ENCODE measurements at regions of chr2 and their contacts with region 1.

Region 1: DNA sequence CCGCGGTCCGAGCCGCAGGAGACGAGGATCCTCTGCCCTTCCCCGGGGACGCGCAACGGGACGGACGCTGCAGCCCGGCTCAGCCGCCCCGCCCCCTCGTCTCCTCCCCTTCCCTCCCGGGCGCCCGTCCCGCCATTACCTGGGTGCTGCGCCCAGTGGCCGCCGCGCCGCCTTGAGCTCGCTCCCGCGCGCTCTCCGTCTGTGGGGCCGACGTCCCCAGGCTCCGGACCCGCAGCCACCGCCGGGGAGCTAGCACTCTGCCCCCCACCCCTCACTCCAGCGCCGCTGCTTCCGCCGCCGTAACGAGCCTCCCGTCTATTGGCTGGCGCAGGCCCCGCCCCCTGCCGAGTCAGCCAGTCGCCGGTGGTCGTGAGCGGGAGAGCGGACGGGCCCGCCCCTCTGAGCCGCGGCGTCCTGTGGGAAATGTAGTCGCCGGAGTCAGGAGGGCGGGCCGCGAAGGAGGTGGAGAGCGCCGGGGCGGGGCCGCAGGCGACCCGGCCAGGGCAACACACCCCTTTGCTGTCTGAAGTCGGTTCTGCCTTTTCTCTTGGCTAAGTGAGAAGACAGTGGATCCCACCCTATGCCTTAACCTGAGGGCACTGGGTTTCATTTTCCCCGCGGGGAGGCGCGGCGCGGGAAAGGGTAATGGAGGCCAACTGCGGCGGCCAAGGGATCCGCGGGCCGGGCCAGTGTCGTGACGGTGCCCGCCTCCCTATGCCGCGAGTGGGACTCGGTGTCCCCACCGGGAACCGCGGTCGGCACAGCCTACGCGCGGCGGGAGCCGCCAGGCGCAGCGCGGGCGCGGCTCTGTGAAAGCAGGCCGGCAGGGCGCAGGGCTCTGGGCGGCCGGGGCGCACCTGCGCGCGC is at the start of gene SAP130:
- DNase-seq: peak; percentile 98
- ATAC-seq: peak; percentile 78
- H3K4me3 Mint-ChIP-seq: peak within 1 kb of the TSS; percentile 92
- H3K27ac Mint-ChIP-seq: peak within 1 kb of the TSS; percentile 84
- H3K4me1 Mint-ChIP-seq: peaks cover 18% of the 10 kb centered on the region
- H3K27me3 Mint-ChIP-seq: peaks cover 4% of the 10 kb centered on the region
- CTCF ChIP-seq: no peak
- total RNA-seq, gene SAP130: 24.7 and 27.1 TPM in 2 replicates

Region 2: DNA sequence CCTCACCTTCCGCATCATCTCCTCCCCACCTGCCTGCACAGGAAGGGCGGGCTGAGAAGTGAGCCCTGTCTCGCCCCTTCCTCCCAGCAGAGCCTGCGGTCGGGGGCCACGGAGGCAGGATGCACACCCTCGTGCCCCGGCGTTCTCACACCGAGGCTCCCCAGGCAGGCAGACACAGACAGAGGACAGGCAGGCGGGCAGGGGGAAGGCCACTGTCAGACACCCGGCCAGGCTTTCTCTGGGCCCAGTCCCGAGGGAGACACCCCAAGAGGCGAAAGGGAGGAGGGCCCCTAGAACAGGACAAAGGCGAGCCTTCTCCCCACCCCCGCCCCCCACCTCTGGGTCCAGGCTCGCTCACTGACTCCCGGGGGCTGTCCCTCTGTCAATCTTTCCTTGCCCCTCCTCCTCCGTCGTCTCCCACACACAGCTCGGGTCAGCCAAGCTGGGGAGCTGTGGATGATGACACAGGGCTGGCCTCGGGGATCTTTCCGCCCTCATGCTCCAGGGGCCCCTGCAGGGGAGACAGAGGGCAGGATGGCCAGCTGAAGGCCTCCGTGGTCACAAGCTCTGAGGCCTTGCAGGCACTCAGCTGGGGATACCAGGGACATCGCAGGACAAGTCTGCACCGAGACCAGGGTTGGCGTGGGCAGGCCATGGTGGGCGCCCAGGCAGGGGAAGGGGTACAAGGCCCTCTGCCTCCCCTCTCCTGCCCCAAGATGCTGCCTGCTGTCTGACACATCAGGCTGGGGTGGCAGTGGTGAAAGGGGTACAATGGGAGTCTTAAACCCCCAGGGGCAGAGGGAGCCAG is 946.0 kb before region 1 on chr2:
- CTCF ChIA-PET with region 1: no interaction called
- POLR2A ChIA-PET with region 1: no interaction called
- intact Hi-C with region 1: loop called (anchors 2 kb)
- DNase-seq: peak; percentile 59
- ATAC-seq: peak; percentile 66
- H3K4me3 Mint-ChIP-seq: peak overlapping the region; percentile 84
- H3K27ac Mint-ChIP-seq: peak overlapping the region; percentile 95
- H3K4me1 Mint-ChIP-seq: peaks cover 92% of the 10 kb centered on the region
- H3K27me3 Mint-ChIP-seq: no peaks in the 10 kb centered on the region
- CTCF ChIP-seq: no peak

Region 3: DNA sequence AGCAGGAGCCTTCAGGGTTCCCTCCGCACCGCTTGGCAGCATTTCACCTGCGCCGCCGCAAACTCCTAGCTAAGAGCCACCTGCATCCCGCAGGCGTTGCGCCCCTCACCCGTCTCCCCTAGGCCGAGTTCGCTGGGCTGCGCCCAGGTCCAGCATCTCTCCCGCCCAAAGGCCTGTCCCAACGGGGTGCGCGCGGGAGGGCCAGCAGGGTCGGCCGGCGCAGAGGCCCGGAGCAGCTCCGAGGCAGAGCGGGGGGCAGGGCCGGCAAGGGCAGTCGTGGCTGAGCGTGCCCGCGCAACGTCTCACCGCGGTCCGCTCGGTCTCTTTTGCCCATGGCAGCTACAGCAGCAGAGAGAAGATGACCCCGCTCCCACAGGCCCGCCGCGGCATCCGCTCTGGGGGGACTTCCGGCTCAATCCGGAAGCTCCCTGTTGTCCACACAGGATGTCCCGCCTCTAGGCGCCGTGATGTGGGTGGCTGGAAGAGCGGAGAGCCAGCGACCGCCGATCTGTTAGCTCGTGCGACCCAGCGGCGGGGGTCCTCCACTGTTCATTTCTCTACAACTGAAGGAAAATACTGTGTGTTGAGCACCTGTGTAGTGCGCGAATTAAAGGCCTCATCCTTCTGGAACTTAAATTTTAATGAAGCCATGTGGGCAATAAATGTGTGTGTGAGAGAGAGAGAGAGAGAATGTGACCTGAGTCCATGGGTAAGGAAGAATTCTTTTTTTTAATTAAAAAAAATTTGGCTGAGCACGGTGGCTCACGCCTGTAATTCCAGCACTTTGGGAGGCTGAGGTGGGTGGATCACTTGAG is 734.1 kb before region 1 on chr2 and contains the start of gene ERCC3:
- CTCF ChIA-PET with region 1: no interaction called
- POLR2A ChIA-PET with region 1: interaction called, 3 read pairs
- intact Hi-C with region 1: loop called (anchors 5 kb)
- DNase-seq: peak; percentile 78
- ATAC-seq: peak; percentile 98
- H3K4me3 Mint-ChIP-seq: peak within 1 kb of the TSS; percentile 97
- H3K27ac Mint-ChIP-seq: peak within 1 kb of the TSS; percentile 95
- H3K4me1 Mint-ChIP-seq: peaks cover 25% of the 10 kb centered on the region
- H3K27me3 Mint-ChIP-seq: no peaks in the 10 kb centered on the region
- CTCF ChIP-seq: no peak
- total RNA-seq, gene ERCC3: 55.9 and 65.6 TPM in 2 replicates

Region 4: DNA sequence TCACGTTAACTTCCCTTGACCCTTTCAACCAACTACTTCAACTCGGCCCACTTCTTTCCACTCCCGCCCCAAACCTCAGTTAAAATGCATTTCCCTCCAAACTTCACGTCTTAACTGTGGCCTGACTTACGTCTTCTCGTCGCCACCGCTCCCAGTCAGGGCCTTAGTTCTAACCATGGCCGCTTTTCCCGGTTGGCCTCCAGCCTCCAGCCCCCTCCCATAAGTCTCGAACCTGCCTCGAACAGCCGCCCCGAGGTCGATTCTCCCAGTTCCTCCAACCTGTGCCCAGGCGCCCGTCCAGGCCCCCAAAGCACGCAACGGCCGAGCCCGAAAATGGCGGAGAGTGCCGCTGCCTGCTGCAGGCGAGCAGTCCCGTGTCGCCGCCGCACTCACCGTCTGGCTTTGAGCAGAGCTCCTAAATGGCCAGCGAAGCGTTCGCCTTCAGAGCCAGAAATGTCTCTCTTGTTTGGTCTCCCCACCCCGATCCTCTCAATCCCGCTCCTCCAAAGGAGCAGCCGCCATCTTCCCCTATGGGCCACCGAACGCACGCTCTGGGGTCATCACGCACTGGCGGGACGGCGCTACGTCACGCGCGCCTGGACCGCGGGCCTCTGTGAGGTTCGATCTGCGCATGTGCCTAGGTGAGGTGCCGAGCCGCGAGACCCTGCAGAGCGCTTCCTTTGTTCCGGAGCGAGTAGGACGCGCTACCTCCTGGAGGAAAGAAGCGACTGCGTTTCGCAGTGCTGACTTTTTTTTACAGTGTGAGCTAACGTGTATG is 217.2 kb before region 1 on chr2 and contains the start of gene WDR33:
- CTCF ChIA-PET with region 1: no interaction called
- POLR2A ChIA-PET with region 1: no interaction called
- intact Hi-C with region 1: loop called (anchors 1 kb)
- DNase-seq: peak; percentile 88
- ATAC-seq: peak; percentile 96
- H3K4me3 Mint-ChIP-seq: peak within 1 kb of the TSS; percentile 89
- H3K27ac Mint-ChIP-seq: peak within 1 kb of the TSS; percentile 99
- H3K4me1 Mint-ChIP-seq: peaks cover 56% of the 10 kb centered on the region
- H3K27me3 Mint-ChIP-seq: no peaks in the 10 kb centered on the region
- CTCF ChIP-seq: no peak
- total RNA-seq, gene WDR33: 83.0 and 93.0 TPM in 2 replicates

Region 5: GRCh38 chr2:127884436-127885345 is 143.3 kb before region 1 on chr2:
- CTCF ChIA-PET with region 1: no interaction called
- POLR2A ChIA-PET with region 1: no interaction called
- intact Hi-C with region 1: loop called (anchors 2 kb)
- DNase-seq: no peak
- ATAC-seq: no peak
- H3K4me3 Mint-ChIP-seq: peak overlapping the region; percentile 88
- H3K27ac Mint-ChIP-seq: peak overlapping the region; percentile 83
- H3K4me1 Mint-ChIP-seq: peaks cover 34% of the 10 kb centered on the region
- H3K27me3 Mint-ChIP-seq: no peaks in the 10 kb centered on the region
- CTCF ChIP-seq: no peak

Measured in activated B cell treated with CpG ODN at 0.5 μM for 24 hours (primary cell).